Heart right ventricle (tissue), 16 donors: ENCODE measurements at regions of chr12 and their contacts with region 1.

Region 1: GRCh38 chr12:102119674-102120563 is at the starts of genes NUP37 and PARPBP:
- DNase-seq: peak; percentile 90 to 92
- ATAC-seq: peak; percentile 100
- H3K4me3 ChIP-seq: peak within 1 kb of the TSS; percentile 61 to 89 (median 82)
- H3K27ac ChIP-seq: peak within 1 kb of the TSS; percentile 25 to 94 (median 80)
- H3K4me1 ChIP-seq: peaks cover 0 to 22% (median 18%) of the 10 kb centered on the region in 9 donors
- H3K27me3 ChIP-seq: no peaks in the 10 kb centered on the region
- CTCF ChIP-seq: peak in 3 of 9 donors; percentile 22 to 45 (median 44)
- total RNA-seq, gene NUP37: 16.5 to 23.9 (median 21.1) TPM
- total RNA-seq, gene PARPBP: 0.39 to 1.8 (median 0.80) TPM in 9 of 10 donors, not detected in the other

Region 2: GRCh38 chr12:102061560-102062418 is 58.1 kb before region 1 on chr12 and contains the start of gene WASHC3:
- intact Hi-C with region 1: loop called in 6 of 10 experiments (anchors 2 to 10 kb)
- DNase-seq: peak; percentile 94 to 96
- ATAC-seq: peak; percentile 99 to 100 (median 100)
- H3K4me3 ChIP-seq: peak within 1 kb of the TSS; percentile 48 to 97 (median 83)
- H3K27ac ChIP-seq: peak within 1 kb of the TSS; percentile 32 to 97 (median 86)
- H3K4me1 ChIP-seq: peaks cover 0 to 14% (median 6%) of the 10 kb centered on the region in 9 donors
- H3K27me3 ChIP-seq: no peaks in the 10 kb centered on the region
- CTCF ChIP-seq: no peak
- total RNA-seq, gene WASHC3: 33.2 to 55.2 (median 40.7) TPM